ENCODE measurements at regions of chr12 and their contacts with region 1.

Region 1: DNA sequence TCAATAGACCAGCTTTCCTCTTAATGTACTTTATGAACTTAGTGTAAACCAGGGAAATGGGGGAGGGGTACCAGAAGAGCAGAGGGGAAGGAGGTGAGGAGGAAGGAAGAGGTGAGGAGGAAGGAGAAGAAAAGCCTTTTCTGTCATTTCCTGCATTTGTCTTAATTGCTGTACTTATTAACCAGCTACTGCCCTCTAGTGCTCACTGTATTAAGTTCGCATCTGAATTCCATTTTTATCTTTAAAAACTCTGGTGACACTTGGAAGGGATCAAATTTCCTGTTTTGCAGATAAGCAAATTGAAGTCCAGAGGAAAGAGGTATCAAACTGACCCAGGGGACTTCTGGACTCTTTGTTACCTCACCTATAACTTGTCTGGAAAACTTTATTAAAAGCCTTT is 22.2 kb downstream of the MANSC1 start:
- DNase-seq: peak in 1 of 4 donors; percentile 46
- ATAC-seq: peak; percentile 62
- H3K4me3 ChIP-seq: no peak overlapping the region
- H3K27ac ChIP-seq: peak overlapping the region in 2 of 4 donors; percentile 12 to 22
- H3K4me1 ChIP-seq: peaks cover 27% of the 10 kb centered on the region
- H3K27me3 ChIP-seq: no peaks in the 10 kb centered on the region
- CTCF ChIP-seq: peak in 6 of 7 experiments; percentile 61 to 81 (median 78)
- POLR2A ChIP-seq: no peak

Region 2: GRCh38 chr12:12081836-12082497 is 245.8 kb before region 1 on chr12:
- intact Hi-C with region 1: loop called (anchors 10 kb)
- DNase-seq: peak in 1 of 4 donors; percentile 5
- ATAC-seq: peak; percentile 66
- H3K4me3 ChIP-seq: no peak overlapping the region
- H3K27ac ChIP-seq: peak overlapping the region in 2 of 4 donors; percentile 21 to 57
- H3K4me1 ChIP-seq: peaks cover 5% of the 10 kb centered on the region
- H3K27me3 ChIP-seq: no peaks in the 10 kb centered on the region
- CTCF ChIP-seq: peak in 4 of 7 experiments; percentile 34 to 42 (median 36)
- POLR2A ChIP-seq: no peak

Region 3: DNA sequence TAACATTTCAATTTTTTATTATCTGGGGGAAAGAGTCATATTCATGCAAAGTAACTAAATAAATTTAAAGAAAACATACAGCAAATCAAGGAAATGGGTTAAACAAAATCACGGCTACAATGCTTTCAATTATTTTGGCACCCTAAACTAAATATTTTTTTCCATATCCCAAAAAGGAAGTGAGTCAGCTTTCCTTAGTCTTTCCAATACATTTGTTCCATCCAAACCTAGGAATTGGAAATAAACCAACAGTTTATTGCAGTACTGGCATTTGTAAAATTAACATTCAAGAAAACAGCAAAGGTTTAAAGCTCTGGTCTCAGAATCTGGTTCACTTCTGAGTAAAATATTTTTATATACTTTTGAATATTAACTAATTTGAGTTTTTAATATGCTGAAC is 167.8 kb before region 1 on chr12:
- intact Hi-C with region 1: loop called (anchors 10 kb)
- DNase-seq: no peak
- ATAC-seq: no peak
- H3K4me3 ChIP-seq: no peak overlapping the region
- H3K27ac ChIP-seq: no peak overlapping the region
- H3K4me1 ChIP-seq: no peaks in the 10 kb centered on the region
- H3K27me3 ChIP-seq: no peaks in the 10 kb centered on the region
- CTCF ChIP-seq: no peak
- POLR2A ChIP-seq: no peak

Measured in body of pancreas (tissue), 4 donors.